Activated CD4-positive, alpha-beta T cell treated with anti-CD3 and anti-CD28 coated beads for 36 hours (primary cell): ENCODE measurements at regions of chr22 and their contacts with region 1.

Region 1: DNA sequence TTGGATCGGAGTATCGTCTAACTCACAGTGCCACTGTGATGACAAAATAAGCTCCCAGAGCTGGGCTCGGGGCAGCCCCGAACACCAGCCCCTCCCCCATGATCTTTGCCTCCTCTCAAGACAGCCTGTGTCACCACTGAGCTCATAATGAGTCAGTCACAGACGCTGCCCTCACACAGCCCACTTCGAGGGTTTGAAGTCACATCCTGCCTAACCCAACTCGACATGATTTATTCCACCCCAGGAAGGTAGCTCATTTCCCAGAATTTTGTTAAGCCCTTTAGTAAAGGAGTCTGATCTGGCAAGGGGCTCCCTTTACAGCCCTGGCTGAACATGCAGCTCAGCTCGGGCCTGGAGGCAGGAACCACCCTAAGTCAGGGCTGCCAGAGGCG is 22.8 kb downstream of the MYH9 start:
- DNase-seq: peak; percentile 96
- ATAC-seq: peak; percentile 89
- H3K4me3 Mint-ChIP-seq: peak overlapping the region; percentile 67
- H3K27ac Mint-ChIP-seq: peak overlapping the region; percentile 96
- H3K4me1 Mint-ChIP-seq: peaks cover 99% of the 10 kb centered on the region
- H3K27me3 Mint-ChIP-seq: no peaks in the 10 kb centered on the region

Region 2: DNA sequence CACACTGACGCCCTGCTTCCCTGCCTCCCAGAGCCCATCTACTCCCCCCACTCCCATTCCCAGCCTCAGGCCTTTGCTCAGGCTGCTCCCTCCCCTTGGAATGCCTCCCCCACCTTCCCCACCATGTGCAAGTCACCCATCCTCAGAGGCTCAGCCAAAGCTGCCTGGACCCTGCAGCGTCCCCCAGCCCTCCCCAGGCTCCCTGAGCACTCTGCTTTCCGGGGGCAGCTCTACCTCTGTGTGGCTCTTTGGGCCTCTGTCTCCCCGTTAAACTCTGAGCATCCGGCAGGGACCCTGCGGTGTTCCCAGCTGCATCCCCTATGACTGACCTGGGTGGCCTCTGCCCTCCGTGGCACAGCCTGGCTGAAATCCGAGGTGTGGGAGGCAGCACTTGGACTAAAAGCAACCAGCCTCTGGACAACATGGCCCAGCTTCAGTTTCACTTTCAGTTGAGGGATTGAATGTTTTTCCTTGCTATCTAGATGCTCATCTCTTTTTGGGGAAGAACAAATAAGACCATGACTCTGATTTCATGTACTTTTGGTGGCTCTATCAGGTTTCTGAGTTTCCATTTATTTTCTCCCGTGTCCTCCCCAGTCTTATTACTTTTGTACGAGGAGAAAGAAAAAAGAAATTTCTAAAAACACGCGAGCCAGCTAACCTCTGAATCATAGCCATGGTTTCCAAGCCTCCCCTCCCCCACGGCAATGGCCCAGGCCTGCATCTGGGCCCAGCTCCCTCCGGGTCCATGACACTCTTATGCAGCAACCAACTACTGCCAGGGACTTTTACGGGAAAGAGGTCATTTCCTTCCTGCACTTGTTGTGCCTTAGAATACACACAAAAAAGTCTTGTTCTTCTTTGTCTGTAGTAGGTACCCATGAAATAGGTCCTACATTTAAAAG is 208.2 kb before region 1 on chr22:
- CTCF ChIA-PET with region 1: no interaction called
- POLR2A ChIA-PET with region 1: no interaction called
- intact Hi-C with region 1: no loop called
- DNase-seq: peak; percentile 89
- ATAC-seq: peak; percentile 72
- H3K4me3 Mint-ChIP-seq: peak overlapping the region; percentile 84
- H3K27ac Mint-ChIP-seq: peak overlapping the region; percentile 99
- H3K4me1 Mint-ChIP-seq: peaks cover 94% of the 10 kb centered on the region
- H3K27me3 Mint-ChIP-seq: no peaks in the 10 kb centered on the region

Region 3: DNA sequence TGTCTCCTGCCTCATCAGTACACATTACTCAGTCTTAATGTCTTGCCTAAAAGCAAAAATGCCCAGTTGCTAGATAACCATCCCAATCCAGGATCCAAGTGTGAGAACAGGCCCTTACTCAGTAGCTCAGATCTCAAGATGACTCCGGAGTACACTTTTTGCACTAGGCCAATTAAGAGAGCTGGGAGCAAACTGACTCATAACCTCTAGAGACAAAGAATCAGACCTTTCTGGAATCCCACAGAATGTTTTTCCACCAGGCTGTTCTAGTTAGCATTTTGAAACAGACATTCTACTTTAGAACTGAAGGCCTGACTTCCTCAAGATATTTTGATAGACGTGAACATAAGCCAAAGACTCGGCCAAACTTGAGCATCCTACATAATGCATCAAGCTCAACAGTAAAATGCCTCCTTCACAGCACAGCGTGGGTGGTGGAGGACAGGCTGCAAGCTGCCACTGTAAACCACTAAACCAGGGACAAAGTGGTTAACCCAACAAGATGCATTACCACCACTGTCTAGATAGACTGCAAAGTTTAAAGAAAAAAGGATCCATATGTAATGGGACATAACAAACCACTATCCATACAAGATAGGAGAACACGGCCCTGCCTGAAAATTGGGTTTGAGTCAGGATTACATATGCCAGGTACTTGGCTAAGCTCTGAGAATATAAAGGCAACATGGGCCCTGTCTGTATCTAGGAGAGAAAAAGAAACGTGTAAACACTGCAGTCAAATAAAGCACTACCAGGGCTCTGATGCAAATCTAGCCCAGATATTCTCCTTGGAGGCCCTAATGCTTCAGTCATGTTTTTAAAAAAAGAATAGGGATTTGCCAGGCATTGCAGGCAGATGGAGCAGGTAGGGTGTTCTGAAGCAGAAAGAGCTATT is 25.6 kb before region 1 on chr22:
- CTCF ChIA-PET with region 1: interaction called, 5 read pairs
- POLR2A ChIA-PET with region 1: interaction called, 8 read pairs
- intact Hi-C with region 1: loop called in 1 of 2 experiments (anchors 2 kb)
- DNase-seq: peak; percentile 74
- ATAC-seq: peak; percentile 62
- H3K4me3 Mint-ChIP-seq: peak overlapping the region; percentile 7
- H3K27ac Mint-ChIP-seq: peak overlapping the region; percentile 75
- H3K4me1 Mint-ChIP-seq: peaks cover 93% of the 10 kb centered on the region
- H3K27me3 Mint-ChIP-seq: no peaks in the 10 kb centered on the region

Region 4: DNA sequence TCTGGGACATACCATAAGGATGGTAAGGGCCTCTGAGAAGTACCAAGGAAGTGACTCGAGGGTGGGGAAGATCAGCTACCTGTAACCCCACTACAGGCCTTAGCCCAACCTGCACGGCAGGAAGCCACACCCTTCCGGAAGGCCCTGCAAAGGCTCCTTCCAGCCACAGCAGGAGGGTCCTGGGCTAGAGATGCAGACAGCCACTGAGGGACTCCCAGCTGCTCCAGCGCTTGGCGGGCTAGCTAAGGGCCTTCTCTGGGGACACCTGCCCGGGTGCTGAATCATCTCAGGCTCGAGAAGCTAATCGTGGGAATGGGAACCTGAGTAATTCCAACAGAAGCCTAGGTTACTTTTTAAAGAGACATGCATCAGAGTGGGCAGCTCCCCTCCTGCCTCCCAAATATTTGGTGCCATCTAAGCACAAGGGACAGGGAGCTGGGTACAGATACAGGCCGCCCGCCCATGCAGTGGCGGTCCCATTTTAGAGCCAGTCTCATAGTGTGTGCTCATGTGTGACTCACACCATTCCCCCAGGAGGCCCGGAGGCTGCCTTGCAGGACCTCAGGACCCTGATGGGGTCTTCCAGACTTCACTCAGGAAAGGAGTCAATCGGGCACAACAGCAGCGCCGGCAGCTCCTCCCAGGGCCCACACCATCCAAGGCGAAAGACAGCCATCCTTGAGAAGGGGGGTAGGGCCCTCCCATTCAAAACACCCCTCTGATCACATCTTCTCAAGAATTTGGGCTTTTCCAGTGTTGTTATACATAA is 14.8 kb after region 1 on chr22:
- CTCF ChIA-PET with region 1: interaction called, 11 read pairs
- POLR2A ChIA-PET with region 1: interaction called, 24 read pairs
- intact Hi-C with region 1: loop called (anchors 1 to 2 kb)
- DNase-seq: peak; percentile 62
- ATAC-seq: peak; percentile 13
- H3K4me3 Mint-ChIP-seq: peak overlapping the region; percentile 75
- H3K27ac Mint-ChIP-seq: peak overlapping the region; percentile 99
- H3K4me1 Mint-ChIP-seq: peaks cover 92% of the 10 kb centered on the region
- H3K27me3 Mint-ChIP-seq: no peaks in the 10 kb centered on the region

Region 5: DNA sequence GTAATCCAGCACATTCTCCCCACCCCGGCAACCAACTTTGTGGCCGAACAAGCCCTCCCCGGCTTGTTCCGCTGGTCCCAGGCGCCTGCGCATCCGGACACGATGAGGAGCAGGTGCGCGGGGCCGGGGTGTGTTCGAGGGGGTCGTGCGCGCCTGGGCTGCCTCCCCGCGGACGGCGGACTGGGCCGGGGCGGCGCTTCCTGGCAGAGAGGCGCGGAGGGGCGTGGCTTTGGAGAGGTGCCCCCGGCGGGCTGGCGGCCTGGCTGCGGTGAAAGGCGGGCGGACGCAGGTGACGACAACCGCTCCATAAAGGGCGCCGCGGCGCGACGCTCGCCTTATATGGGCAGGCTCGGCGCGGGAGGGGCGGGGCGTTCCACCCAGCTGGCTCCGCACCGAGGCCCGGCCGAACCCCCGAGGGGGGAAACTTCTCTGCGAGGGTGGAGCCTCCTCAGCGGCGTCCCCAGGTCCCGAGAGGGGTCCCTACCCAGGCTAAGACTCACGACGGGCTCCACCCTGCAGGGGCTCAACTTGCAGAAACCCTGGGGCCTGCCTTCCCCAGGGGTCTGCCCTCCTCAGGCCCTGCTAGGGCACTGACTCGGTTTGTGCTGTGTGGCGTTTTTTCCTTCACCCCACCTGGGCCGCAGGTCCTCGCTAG is 90.0 kb after region 1 on chr22:
- CTCF ChIA-PET with region 1: interaction called, 3 read pairs
- POLR2A ChIA-PET with region 1: interaction called, 3 read pairs
- intact Hi-C with region 1: loop called in 1 of 2 experiments (anchors 1 kb)
- DNase-seq: peak; percentile 98
- ATAC-seq: peak; percentile 82
- H3K4me3 Mint-ChIP-seq: peak overlapping the region; percentile 71
- H3K27ac Mint-ChIP-seq: peak overlapping the region; percentile 67
- H3K4me1 Mint-ChIP-seq: peaks cover 44% of the 10 kb centered on the region
- H3K27me3 Mint-ChIP-seq: no peaks in the 10 kb centered on the region

Region 6: DNA sequence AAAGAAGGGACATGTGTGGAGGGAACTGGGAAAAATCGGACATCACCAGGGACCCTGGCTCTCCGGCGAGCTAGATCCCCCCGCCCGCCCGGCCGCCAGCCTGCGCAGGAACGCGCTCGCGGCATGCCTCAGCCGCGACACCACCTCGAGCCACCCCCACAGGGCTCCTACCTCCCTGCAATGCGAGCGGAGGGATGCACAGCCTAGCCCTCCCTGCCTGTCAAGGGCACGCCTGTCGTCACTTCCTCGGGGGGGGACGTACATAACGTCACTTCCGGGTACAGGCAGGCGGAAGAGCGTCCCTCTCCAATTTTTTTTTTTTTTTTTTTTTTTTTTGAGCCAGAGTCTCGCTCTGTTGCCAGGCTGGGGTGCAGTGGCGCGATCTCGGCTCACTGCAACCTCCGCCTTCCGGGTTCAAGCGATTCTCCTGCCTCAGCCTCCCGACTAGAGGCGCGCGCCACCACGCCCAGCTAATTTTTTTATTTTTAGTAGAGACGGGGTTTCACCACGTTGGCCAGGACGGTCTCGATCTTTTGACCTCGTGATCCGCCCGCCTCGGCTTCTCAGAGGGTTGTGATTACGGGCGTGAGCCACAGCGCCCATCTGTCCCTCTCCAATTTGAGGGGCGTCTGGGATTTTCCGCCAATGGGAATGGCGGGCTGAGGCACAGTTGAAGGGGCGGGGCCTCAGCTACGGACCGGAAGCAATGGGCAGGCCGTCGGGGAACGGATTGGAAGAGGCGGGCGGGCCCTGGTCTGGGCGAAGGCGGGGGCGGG is 116.6 kb after region 1 on chr22 and contains the start of gene TXN2:
- CTCF ChIA-PET with region 1: interaction called, 4 read pairs
- POLR2A ChIA-PET with region 1: interaction called, 3 read pairs
- intact Hi-C with region 1: loop called in 1 of 2 experiments (anchors 1 kb)
- DNase-seq: peak; percentile 97
- ATAC-seq: peak; percentile 89
- H3K4me3 Mint-ChIP-seq: peak within 1 kb of the TSS; percentile 81
- H3K27ac Mint-ChIP-seq: peak within 1 kb of the TSS; percentile 94
- H3K4me1 Mint-ChIP-seq: peaks cover 19% of the 10 kb centered on the region
- H3K27me3 Mint-ChIP-seq: no peaks in the 10 kb centered on the region
- total RNA-seq, gene TXN2: 95.5 to 99.1 TPM